ENCODE measurements at regions of chr7 and their contacts with region 1.

Region 1: DNA sequence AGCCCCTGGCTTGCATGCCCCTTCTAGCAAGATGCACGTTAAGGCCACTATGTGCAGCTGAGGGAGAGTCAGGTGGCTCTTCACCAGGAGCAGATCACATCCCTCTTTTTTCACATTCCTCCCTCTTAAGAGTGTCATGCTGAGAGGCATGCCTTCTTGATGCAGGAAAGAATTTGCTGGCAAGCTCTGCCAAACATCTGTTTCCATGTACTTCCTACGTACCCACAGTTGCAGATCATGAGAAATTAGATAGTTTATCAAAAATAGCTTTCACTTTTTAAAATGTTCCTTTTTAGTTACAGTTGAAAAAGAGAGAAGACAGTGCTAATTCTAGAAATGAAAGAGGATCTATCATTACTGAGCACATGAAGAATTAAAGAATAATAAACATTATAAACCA is 79.7 kb upstream of the ZNF722 start:
- DNase-seq: no peak
- ATAC-seq: no peak
- H3K4me3 ChIP-seq: no peak overlapping the region
- H3K27ac ChIP-seq: no peak overlapping the region
- H3K4me1 ChIP-seq: no peaks in the 10 kb centered on the region
- H3K27me3 ChIP-seq: no peaks in the 10 kb centered on the region
- CTCF ChIP-seq: no peak
- POLR2A ChIP-seq: no peak

Region 2: GRCh38 chr7:63900394-63901203 is 18.4 kb before region 1 on chr7:
- intact Hi-C with region 1: loop called in 2 of 10 experiments (anchors 2 kb)
- DNase-seq: peak; percentile 85 to 97 (median 97)
- ATAC-seq: peak; percentile 99 to 100 (median 100)
- H3K4me3 ChIP-seq: peak overlapping the region; percentile 38 to 89 (median 70)
- H3K27ac ChIP-seq: peak overlapping the region in 8 of 12 donors; percentile 30 to 72 (median 50)
- H3K4me1 ChIP-seq: peaks cover 0 to 13% (median 0%) of the 10 kb centered on the region in 12 donors
- H3K27me3 ChIP-seq: no peaks in the 10 kb centered on the region
- CTCF ChIP-seq: no peak
- POLR2A ChIP-seq: no peak

Region 3: DNA sequence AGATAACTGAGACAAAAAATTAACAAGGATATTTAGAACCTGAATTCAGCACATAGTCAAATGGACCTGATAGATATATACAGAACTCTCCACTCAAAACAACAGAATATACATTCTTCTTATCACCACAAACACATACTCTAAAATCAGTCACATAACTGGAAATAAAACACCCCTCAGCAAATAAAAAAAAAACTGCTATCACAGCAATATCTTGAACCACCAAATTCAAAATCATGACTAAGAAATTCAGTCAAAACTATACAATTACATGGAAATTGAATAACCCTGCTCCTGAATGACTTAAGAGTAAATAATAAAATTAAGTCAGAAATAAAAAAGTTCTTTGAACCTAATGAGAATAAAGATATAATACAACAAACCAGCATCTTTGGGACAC is 49.6 kb after region 1 on chr7:
- intact Hi-C with region 1: no loop called
- DNase-seq: no peak
- ATAC-seq: no peak
- H3K4me3 ChIP-seq: no peak overlapping the region
- H3K27ac ChIP-seq: no peak overlapping the region
- H3K4me1 ChIP-seq: no peaks in the 10 kb centered on the region
- H3K27me3 ChIP-seq: no peaks in the 10 kb centered on the region
- CTCF ChIP-seq: no peak
- POLR2A ChIP-seq: no peak

Region 4: DNA sequence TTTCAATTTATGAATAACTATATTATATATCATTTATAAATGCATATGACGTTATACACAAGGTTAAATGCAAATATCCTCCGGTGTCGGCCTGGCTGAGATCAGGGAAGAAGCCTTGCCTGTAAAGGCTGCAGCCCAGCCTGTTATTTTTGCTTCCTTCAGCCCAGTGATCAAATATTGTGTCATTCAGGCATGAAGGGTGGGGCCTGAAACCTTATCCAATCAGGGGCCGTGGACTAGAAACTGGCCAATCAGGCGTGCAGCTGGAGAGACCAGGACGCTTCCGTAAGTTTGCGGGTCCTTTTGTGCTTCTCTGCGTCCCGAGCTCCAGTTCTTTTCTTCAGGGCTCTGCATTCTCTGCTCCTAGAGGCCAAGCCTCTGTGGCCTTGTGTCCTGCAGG is 79.6 kb after region 1 on chr7 and contains the start of gene ZNF722:
- intact Hi-C with region 1: no loop called
- DNase-seq: no peak
- ATAC-seq: no peak
- H3K4me3 ChIP-seq: no peak within 1 kb of the TSS
- H3K27ac ChIP-seq: no peak within 1 kb of the TSS
- H3K4me1 ChIP-seq: no peaks in the 10 kb centered on the region
- H3K27me3 ChIP-seq: no peaks in the 10 kb centered on the region
- CTCF ChIP-seq: no peak
- POLR2A ChIP-seq: no peak
- total RNA-seq, gene ZNF722: not detected

Region 5: DNA sequence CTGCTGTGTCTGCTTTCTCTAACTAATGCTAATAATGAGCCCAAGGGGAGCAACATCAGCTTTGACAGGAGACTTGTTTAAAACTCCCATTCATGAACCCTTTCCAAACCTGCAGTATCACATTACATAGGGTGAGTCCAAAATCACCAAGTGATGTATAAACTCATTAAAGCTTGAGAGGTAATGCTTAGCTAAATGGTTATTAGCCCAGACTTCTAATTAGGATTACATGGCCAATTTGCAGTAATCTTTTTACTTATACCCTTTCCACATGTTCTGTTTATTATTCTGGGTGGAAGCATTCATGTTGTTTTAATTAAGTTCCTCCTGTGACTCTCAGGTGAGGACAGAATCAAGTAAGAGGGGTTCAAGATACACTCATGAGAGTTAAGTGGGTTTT is 892.8 kb after region 1 on chr7:
- intact Hi-C with region 1: no loop called
- DNase-seq: no peak
- ATAC-seq: no peak
- H3K4me3 ChIP-seq: no peak overlapping the region
- H3K27ac ChIP-seq: no peak overlapping the region
- H3K4me1 ChIP-seq: no peaks in the 10 kb centered on the region
- H3K27me3 ChIP-seq: no peaks in the 10 kb centered on the region
- CTCF ChIP-seq: no peak
- POLR2A ChIP-seq: no peak